Stomach (tissue), 19 donors: ENCODE measurements at regions of chr11 and their contacts with region 1.

Region 1: GRCh38 chr11:65884686-65885092 is 3.6 kb downstream of the FIBP start:
- DNase-seq: peak; percentile 83 to 91
- H3K4me3 ChIP-seq: no peak overlapping the region
- H3K27ac ChIP-seq: peak overlapping the region in 4 of 5 donors; percentile 10 to 51 (median 26)
- H3K4me1 ChIP-seq: peaks cover 31 to 52% (median 47%) of the 10 kb centered on the region in 4 donors
- H3K27me3 ChIP-seq: no peaks in the 10 kb centered on the region
- CTCF ChIP-seq: peak in 5 of 7 experiments; percentile 96 to 99 (median 97)
- EP300 ChIP-seq: no peak
- POLR2A ChIP-seq: no peak

Region 2: DNA sequence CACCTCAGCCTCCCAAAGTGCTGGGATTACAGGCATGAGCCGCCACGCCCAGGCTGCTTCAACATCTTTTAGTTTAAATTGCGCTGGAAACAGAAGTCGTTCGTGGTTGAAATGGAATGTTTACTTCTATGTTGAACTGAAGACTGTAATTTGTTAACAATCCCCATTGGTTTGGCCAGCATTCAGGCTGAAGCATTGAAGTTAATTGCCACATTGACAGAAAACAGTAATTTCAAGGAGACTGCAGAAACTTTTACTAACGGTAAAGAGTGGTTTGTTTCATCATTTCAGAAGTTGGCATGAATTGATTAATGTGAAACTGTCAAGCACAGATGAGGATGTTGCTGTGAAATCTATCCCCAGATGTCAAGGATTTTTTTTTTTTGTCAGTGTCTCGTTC is 118.2 kb before region 1 on chr11:
- intact Hi-C with region 1: no loop called
- DNase-seq: no peak
- H3K4me3 ChIP-seq: no peak overlapping the region
- H3K27ac ChIP-seq: no peak overlapping the region
- H3K4me1 ChIP-seq: peaks cover 4 to 21% (median 7%) of the 10 kb centered on the region in 4 donors
- H3K27me3 ChIP-seq: no peaks in the 10 kb centered on the region
- CTCF ChIP-seq: no peak
- EP300 ChIP-seq: no peak
- POLR2A ChIP-seq: no peak

Region 3: DNA sequence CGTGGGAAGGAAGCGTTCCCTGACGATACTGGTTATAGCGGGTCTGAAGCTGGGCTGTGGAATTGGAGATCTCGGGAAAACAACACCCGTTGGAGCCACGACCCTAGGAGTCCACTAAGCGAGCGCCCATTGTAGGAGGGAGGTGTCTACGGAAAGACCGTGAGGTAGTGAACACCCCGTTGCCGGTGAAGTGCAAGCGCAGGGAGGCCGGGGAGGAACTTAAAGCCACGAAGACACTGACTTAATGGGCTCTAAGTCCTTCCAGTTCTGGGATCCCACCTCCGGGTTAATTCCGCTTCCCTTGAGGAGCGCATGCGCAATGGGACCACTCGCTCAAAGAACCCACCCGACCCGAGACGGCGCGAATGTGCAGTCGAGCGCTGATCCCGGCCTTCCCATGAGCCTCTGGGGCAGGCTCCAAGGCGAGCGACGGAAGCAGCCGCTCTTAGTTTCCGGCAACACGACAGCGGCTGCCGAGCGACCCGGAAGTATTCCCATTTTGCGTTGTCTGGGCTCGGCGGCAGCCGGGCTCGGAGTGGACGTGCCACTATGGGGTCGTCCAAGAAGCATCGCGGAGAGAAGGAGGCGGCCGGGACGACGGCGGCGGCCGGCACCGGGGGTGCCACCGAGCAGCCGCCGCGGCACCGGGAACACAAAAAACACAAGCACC is 76.7 kb after region 1 on chr11 and contains the start of gene SART1:
- intact Hi-C with region 1: loop called (anchors 5 kb)
- DNase-seq: peak; percentile 97 to 99
- H3K4me3 ChIP-seq: peak within 1 kb of the TSS; percentile 97 to 100 (median 98)
- H3K27ac ChIP-seq: peak within 1 kb of the TSS; percentile 81 to 94 (median 91)
- H3K4me1 ChIP-seq: peaks cover 17 to 38% (median 32%) of the 10 kb centered on the region in 4 donors
- H3K27me3 ChIP-seq: peaks cover 0 to 12% (median 0%) of the 10 kb centered on the region in 3 donors
- CTCF ChIP-seq: peak in 1 of 7 experiments; percentile 29
- EP300 ChIP-seq: no peak
- POLR2A ChIP-seq: peak in 1 of 4 donors; percentile 4
- total RNA-seq, gene SART1: 26.1 to 278 (median 38.4) TPM

Region 4: DNA sequence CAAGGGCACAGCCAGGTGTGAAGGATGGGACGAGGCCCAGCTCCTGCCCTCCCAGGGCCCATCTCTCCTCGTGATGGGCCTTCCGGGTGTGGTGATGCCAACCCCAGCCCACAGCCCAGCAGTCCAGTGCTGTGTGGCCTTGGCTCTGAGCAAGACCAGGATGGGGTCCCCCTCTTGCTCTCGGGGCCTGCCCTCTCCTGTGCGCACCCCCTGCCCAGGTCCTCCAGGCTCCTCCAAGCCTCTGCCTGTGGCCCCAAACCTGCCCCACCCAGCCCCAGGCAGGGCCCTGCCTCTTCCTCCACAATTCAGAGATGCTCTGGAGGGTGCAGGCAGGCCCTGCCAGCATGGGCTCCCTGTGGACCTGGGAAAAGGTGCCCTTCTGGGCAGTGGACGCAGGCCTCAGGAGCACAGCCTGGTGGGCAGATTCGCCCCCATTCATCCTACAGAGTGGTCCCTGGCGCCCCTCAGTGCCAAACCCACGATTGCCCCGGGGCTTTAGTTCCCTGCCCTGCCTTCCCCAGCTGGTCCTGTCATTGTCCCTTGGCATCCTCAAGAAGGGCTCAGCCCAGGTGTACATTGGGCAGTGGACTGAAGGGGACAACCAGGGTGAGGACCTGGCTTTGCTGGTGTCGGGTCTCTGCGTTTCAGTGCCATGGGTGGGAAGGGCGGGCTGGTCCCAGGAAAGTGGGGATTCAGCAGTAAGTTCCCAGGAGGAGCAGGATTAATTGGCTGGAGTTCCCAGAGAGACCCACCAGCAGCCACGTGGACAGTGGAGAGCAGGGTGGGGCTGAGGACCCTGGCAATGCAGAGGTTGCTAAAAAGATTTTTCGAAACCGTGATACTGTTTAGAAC is 97.5 kb after region 1 on chr11:
- intact Hi-C with region 1: no loop called
- DNase-seq: no peak
- H3K4me3 ChIP-seq: no peak overlapping the region
- H3K27ac ChIP-seq: peak overlapping the region in 2 of 5 donors; percentile 7
- H3K4me1 ChIP-seq: no peaks in the 10 kb centered on the region
- H3K27me3 ChIP-seq: no peaks in the 10 kb centered on the region
- CTCF ChIP-seq: no peak
- EP300 ChIP-seq: no peak
- POLR2A ChIP-seq: no peak